HEK293T (cell line): ENCODE measurements at regions of chr17 and their contacts with region 1.

Region 1: GRCh38 chr17:40219073-40219860 is at the start of gene WIPF2:
- DNase-seq: peak; percentile 88

Region 2: DNA sequence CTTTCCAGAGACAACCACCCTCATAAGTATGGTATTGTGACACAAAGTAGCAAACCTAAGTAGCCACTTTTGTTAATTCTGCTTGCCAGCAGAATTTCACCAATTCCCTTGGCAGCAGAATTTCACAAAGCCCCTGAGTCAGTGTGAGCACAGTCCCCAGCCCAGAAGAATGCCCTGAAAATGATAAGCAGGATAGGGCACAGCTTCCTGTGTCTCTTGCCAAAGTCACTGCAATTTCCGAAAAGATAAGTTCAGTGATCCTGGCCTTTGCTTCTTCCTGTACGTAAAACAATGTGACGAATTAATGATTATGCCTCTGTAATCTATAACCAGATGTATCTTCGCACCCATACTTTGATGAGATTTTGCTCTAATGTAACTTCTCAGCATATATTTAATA is 16.1 kb before region 1 on chr17:
- CTCF ChIA-PET with region 1: interaction called, 11 read pairs
- POLR2A ChIA-PET with region 1: interaction called, 6 read pairs
- DNase-seq: no peak

Region 3: DNA sequence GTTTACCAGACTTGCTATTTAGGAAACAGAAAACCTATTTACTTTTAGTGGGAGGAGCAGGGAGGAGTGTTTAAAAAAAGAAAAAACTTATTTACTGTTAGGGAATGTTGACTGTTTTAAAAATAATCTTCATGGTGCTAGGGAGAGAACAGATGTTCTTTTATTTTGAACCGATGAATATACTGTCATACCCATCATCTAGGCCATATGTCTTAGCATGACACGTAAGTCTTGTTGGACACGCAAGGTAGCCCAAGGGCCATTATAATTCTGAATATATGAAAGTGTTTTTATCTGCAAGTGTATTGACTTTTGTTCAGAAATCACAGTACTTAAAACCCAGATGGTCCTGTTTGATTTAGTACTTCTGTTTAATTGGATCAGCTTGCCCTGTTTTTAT is 11.4 kb after region 1 on chr17:
- CTCF ChIA-PET with region 1: no interaction called
- POLR2A ChIA-PET with region 1: interaction called, 10 read pairs
- DNase-seq: no peak